Thyroid gland (tissue), 4 donors: ENCODE measurements at regions of chr10 and their contacts with region 1.

Region 1: DNA sequence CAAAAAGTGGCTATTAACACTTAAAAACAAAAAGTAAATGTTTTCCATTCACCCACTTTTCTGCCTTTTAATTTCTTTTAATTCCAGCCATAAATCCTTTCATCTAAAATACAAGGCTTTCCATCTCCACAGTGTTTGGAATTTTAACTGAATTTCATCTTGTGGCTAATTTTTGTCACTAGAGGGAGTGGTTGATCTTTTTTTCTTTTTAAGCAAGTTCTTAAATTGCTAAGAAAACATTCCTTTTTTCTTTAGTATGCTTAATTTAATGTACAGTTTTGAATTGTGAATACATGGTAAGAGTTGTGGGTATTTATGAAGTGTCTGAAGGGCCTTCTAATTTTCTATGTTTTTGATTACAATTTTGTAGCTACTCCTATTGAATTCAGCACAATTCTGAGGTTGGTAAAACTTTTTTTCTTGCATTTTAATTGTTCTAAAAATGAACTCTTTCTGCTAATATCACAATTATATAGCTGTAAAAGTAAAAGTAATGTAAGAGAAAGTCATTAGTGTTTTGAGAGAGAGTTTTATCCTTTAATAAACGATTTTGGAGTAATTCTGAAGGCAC is 54.9 kb upstream of the ANK3 start:
- DNase-seq: no peak
- H3K4me3 ChIP-seq: no peak overlapping the region
- H3K27ac ChIP-seq: peak overlapping the region in 2 of 3 donors; percentile 72 to 75
- H3K4me1 ChIP-seq: peaks cover 35 to 41% of the 10 kb centered on the region in 2 donors
- H3K27me3 ChIP-seq: no peaks in the 10 kb centered on the region
- CTCF ChIP-seq: peak in 5 of 6 experiments; percentile 24 to 89 (median 56)
- POLR2A ChIP-seq: no peak

Region 2: GRCh38 chr10:60524541-60524940 is 80.0 kb after region 1 on chr10:
- intact Hi-C with region 1: no loop called
- DNase-seq: no peak
- H3K4me3 ChIP-seq: no peak overlapping the region
- H3K27ac ChIP-seq: no peak overlapping the region
- H3K4me1 ChIP-seq: no peaks in the 10 kb centered on the region
- H3K27me3 ChIP-seq: no peaks in the 10 kb centered on the region
- CTCF ChIP-seq: no peak
- POLR2A ChIP-seq: no peak

Region 3: GRCh38 chr10:60646966-60647796 is 202.6 kb after region 1 on chr10:
- intact Hi-C with region 1: loop called (anchors 5 kb)
- DNase-seq: peak; percentile 18 to 36
- H3K4me3 ChIP-seq: no peak overlapping the region
- H3K27ac ChIP-seq: peak overlapping the region in 1 of 3 donors; percentile 55
- H3K4me1 ChIP-seq: peaks cover 23 to 32% of the 10 kb centered on the region in 2 donors
- H3K27me3 ChIP-seq: no peaks in the 10 kb centered on the region
- CTCF ChIP-seq: peak; percentile 67 to 90 (median 73)
- POLR2A ChIP-seq: no peak

Region 4: DNA sequence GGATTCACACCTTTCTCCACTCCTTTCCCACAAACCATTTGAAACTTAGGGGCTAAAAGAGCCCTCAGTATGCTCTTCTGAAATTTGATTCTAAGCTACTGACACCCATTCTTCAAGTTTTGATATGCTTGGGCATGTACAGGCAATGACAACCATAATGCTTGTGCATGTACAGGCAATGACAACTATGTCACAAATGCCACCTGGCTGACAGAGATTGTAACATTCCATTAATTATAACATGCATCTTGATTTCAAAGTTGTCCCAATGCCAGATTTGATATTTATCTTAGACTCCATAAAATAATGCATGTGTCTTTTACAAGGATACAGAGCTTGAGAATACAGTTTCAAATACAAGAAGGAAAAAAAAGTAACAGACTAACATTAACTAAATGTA is 316.2 kb after region 1 on chr10:
- intact Hi-C with region 1: loop called (anchors 10 kb)
- DNase-seq: no peak
- H3K4me3 ChIP-seq: no peak overlapping the region
- H3K27ac ChIP-seq: no peak overlapping the region
- H3K4me1 ChIP-seq: no peaks in the 10 kb centered on the region
- H3K27me3 ChIP-seq: no peaks in the 10 kb centered on the region
- CTCF ChIP-seq: no peak
- POLR2A ChIP-seq: no peak

Region 5: DNA sequence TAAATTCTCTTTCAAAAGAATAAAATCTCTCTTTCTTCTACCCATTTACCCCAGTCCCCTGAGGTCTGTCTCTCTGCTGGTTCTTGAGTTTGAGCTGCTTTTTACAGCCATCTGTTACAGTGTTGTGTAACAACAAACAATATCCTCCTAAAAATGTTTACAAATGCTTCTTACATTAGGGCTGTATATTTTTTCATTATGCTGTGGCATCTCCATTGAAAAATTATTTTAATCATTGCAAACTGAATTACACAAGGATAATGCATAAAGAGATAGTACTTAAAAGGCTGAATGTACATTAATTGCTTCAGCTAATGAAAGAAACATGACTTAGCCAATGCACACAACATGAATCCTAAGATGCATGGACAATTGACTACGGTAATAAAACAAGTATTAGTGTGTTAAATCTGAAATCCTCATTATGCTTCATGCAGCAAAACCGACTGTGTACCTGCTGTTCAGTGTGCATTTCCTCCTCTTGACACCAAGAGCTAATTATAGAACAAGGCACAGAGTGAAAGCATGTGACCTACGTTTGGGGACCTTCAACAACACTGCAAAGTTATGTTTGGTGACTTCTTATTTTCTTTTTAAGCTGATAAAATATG is 681.1 kb after region 1 on chr10:
- intact Hi-C with region 1: no loop called
- DNase-seq: no peak
- H3K4me3 ChIP-seq: no peak overlapping the region
- H3K27ac ChIP-seq: no peak overlapping the region
- H3K4me1 ChIP-seq: peaks cover 0 to 4% of the 10 kb centered on the region in 2 donors
- H3K27me3 ChIP-seq: no peaks in the 10 kb centered on the region
- CTCF ChIP-seq: no peak
- POLR2A ChIP-seq: no peak